IMR-90 (cell line): ENCODE measurements at regions of chr4 and their contacts with region 1.

Region 1: DNA sequence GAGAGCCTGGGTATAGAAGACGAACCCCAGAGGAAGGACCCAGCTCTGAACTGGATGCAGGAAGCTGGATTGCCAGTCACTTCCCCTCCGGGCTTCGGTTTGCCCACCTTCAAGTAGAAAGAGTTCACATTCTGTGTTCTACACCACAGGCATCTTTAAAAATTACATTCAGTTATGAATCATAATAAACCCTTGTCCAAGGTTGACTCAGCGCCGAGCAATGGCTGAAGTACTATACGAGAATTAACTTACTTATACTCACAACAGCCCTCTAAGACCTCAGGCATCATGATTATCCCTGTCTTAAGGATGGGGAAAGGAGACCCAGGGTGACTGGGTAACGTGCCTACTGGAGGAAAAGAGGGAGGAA is 72.5 kb downstream of the EVC2 start:
- DNase-seq: peak; percentile 87
- ATAC-seq: peak; percentile 78
- H3K4me3 ChIP-seq: no peak overlapping the region
- H3K27ac ChIP-seq: no peak overlapping the region
- H3K4me1 ChIP-seq: peaks cover 15% of the 10 kb centered on the region
- H3K27me3 ChIP-seq: no peaks in the 10 kb centered on the region
- CTCF ChIP-seq: no peak
- POLR2A ChIP-seq: no peak
- RAD21 ChIP-seq: no peak

Region 2: DNA sequence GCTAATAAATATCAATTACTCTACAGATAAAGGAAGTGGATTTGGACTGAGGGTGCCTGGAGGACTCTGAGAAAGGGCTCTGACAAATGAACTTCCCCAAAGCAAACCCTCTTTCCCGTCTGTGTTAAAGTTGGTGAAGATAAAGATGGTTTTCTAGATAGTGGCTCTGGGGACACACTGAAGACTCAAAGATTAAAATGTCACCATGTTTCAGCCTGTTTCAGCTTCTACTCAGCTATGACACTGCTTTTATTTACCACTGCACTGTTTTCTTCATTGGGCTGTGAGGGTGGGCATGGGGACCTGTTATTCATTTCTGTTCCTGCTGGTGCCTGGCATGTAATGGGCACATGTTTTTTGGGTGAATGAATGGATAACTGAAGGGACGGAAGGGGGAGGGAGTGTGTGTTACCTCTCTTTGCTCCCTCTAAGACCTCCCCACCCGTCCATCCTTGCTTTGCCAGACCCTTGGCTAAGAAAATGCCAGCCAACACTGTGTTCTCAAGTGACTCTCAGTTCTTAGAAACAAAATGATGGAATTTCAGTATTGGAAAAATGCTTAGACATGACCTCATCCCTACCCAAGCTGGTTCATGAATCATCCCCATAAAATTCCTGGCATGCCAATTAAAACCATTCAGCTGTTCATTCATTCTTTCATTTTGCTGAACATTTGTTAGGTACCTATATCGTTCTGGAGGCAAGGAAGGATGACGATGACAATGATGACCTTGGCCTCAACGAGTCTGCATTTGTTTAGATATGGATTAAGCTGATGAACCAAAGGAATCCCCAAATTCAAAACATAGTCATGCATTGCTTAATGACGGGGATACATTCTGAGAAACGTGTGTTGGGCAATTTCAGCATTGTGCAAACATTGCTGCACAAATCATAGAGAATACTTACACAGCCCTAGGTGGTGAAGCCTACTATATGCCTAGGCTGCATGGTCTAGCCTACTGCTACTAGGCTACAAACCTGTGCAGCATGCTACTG is 598.0 kb before region 1 on chr4:
- CTCF ChIA-PET with region 1: no interaction called
- POLR2A ChIA-PET with region 1: no interaction called
- dilution Hi-C with region 1: no loop called
- in situ Hi-C with region 1: no loop called
- intact Hi-C with region 1: loop called (anchors 5 kb)
- DNase-seq: peak; percentile 99
- ATAC-seq: peak; percentile 84
- H3K4me3 ChIP-seq: no peak overlapping the region
- H3K27ac ChIP-seq: peak overlapping the region; percentile 96
- H3K4me1 ChIP-seq: peaks cover 35% of the 10 kb centered on the region
- H3K27me3 ChIP-seq: no peaks in the 10 kb centered on the region
- CTCF ChIP-seq: no peak
- POLR2A ChIP-seq: no peak
- RAD21 ChIP-seq: no peak

Region 3: GRCh38 chr4:5791654-5792053 is 155.8 kb after region 1 on chr4:
- CTCF ChIA-PET with region 1: no interaction called
- POLR2A ChIA-PET with region 1: no interaction called
- dilution Hi-C with region 1: no loop called
- in situ Hi-C with region 1: no loop called
- intact Hi-C with region 1: loop called (anchors 5 kb)
- DNase-seq: no peak
- ATAC-seq: no peak
- H3K4me3 ChIP-seq: no peak overlapping the region
- H3K27ac ChIP-seq: no peak overlapping the region
- H3K4me1 ChIP-seq: no peaks in the 10 kb centered on the region
- H3K27me3 ChIP-seq: no peaks in the 10 kb centered on the region
- CTCF ChIP-seq: no peak
- POLR2A ChIP-seq: no peak
- RAD21 ChIP-seq: no peak